Keratinocyte (primary cell): ENCODE measurements at regions of chr16 and their contacts with region 1.

Region 1: GRCh38 chr16:75931043-75931442 is 204.8 kb upstream of the CPHXL start:
- DNase-seq: no peak
- H3K4me3 ChIP-seq: no peak overlapping the region
- H3K27ac ChIP-seq: no peak overlapping the region
- H3K4me1 ChIP-seq: no peaks in the 10 kb centered on the region
- H3K27me3 ChIP-seq: no peaks in the 10 kb centered on the region
- CTCF ChIP-seq: no peak

Region 2: DNA sequence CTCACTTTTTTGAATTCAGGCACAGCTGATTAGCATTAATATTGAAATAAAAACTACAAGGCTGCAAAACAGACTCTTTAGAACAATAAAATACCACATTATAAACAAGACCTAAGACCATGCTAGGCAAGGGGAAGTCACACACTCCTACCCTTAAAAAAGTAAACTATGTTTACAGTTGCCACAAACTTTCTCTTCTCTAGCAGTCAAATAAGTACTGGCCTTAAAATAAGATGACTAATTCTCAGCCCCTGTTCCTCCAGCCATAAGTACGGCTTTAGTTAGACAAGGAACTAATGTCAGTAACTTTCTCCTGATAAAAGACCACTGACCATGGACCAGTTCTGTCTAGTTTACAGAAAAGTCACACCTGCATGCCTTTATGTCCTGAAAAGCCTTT is 185.2 kb before region 1 on chr16:
- dilution Hi-C with region 1: no loop called
- DNase-seq: no peak
- H3K4me3 ChIP-seq: no peak overlapping the region
- H3K27ac ChIP-seq: no peak overlapping the region
- H3K4me1 ChIP-seq: no peaks in the 10 kb centered on the region
- H3K27me3 ChIP-seq: no peaks in the 10 kb centered on the region
- CTCF ChIP-seq: no peak

Region 3: GRCh38 chr16:75801307-75801706 is 129.7 kb before region 1 on chr16:
- dilution Hi-C with region 1: loop called (anchors 25 kb)
- DNase-seq: no peak
- H3K4me3 ChIP-seq: no peak overlapping the region
- H3K27ac ChIP-seq: no peak overlapping the region
- H3K4me1 ChIP-seq: no peaks in the 10 kb centered on the region
- H3K27me3 ChIP-seq: no peaks in the 10 kb centered on the region
- CTCF ChIP-seq: no peak